A549 (cell line): ENCODE measurements at regions of chr19 and their contacts with region 1.

Region 1: GRCh38 chr19:47112997-47113849 is at the start of gene ZC3H4:
- DNase-seq: peak; percentile 99 to 100
- ATAC-seq: peak; percentile 81 to 92
- H3K4me3 ChIP-seq: peak within 1 kb of the TSS; percentile 98
- H3K27ac ChIP-seq: peak within 1 kb of the TSS; percentile 99
- H3K4me1 ChIP-seq: peaks cover 27% of the 10 kb centered on the region
- CTCF ChIP-seq: no peak
- EP300 ChIP-seq: no peak
- POLR2A ChIP-seq: peak; percentile 75
- RAD21 ChIP-seq: no peak
- polyA plus RNA-seq, gene ZC3H4: 7.7 and 9.6 TPM in 2 replicates

Region 2: DNA sequence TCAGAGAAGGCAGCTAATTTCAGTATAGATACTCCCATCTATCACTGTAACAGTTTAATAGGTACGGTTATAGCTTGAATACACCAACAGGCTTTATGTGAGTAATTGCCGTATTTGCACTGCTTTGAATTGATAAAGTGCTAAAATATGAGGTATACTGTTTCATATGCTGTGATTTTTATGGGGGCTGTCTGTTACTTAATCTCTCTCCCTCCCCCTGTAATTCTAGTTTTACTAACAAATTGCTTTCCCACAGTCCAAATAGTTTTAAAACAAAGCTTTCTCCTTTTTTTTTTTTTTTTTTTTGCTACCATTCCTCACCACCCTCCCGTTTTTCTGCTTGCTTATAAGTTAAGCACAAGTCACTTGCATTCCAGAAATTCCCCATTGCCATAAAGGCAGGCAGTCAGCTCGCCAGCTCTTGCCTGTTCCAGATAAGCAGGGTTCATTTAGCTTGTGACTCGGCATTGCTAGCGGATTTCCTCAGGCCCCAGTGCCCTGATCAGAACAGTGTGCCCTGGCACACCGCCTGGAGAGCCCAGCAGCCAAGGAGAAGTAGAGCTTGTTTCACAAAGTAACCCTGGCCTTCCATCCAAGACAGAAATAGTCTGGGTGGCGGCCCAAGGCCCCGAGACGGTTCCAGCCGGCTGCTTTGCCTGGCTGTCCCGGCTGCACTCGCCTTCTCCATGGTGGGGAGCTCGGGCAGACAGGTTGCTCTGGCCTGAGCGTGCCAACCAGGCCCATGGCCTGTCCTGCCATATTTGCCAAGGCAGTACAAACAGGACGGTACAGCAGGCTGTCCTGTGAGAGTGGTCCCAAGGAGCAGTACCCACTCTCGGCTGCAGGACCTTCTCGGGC is 137.1 kb before region 1 on chr19:
- CTCF ChIA-PET with region 1: no interaction called
- POLR2A ChIA-PET with region 1: no interaction called
- DNase-seq: peak in 1 of 2 experiments; percentile 58
- ATAC-seq: peak; percentile 38 to 75
- H3K4me3 ChIP-seq: no peak overlapping the region
- H3K27ac ChIP-seq: peak overlapping the region; percentile 61 to 76
- H3K4me1 ChIP-seq: peaks cover 36% of the 10 kb centered on the region
- CTCF ChIP-seq: no peak
- EP300 ChIP-seq: no peak
- POLR2A ChIP-seq: no peak
- RAD21 ChIP-seq: no peak

Region 3: DNA sequence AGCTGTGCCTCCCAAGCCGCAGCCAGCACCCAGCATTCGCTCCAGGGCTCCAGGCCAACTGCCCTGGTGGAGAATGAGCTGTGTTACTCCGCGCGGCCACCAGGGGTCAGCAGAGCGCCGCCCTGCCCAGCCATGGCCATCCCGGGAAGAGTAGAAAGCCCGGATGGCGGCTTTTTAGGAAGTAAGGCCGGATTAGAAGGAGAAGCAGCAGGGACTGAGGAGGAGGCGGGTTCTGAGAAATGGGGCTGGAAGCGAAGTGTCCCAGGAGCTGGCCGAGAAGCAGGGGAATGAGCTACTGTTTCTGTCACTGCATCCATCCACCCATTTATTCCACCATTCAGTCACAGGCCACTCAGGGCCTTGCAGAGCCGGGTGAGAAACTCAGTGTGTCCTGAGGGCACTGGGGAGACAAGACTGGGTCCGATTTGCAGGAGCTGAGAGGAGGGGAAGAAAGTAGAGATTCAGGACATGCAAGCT is 100.1 kb before region 1 on chr19:
- CTCF ChIA-PET with region 1: interaction called, 128 read pairs
- POLR2A ChIA-PET with region 1: interaction called, 5 read pairs
- DNase-seq: peak in 1 of 2 experiments; percentile 83
- ATAC-seq: peak; percentile 94 to 96
- H3K4me3 ChIP-seq: no peak overlapping the region
- H3K27ac ChIP-seq: peak overlapping the region; percentile 47 to 76
- H3K4me1 ChIP-seq: peaks cover 4% of the 10 kb centered on the region; the same call in 1 of the 3 replicates
- CTCF ChIP-seq: peak; percentile 95
- EP300 ChIP-seq: no peak
- POLR2A ChIP-seq: no peak
- RAD21 ChIP-seq: peak; percentile 98

Region 4: DNA sequence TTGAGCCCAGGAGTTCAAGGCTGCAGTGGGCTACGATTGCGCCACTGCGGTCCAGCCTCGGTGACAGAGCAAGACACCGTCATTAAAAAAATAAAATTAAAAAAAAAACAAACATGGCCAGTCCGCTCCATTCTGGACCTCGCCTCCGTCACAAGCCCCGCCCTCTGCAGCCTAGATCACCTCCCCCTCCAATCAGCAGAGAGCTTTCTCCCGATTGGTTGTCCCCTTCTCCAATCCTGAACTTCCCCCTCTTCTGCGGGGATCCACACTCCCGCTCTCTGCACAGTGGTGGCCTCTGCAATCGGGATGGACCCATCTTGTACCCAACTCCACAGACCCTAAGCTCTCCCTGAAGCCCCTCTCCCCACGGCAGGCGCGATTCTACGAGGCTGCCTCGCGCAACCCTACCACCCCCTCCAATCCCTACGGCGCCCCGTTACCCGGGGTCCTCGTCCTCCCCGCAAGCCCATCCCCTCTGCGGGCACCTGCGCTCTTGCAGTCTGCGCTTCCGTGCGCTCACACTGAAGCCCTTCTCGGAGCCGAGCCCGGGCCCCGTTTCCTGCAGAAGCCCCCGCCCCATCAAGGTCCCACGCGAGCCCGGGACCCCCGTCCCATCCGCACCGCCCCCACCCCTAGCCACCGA is 65.3 kb before region 1 on chr19:
- CTCF ChIA-PET with region 1: interaction called, 3 read pairs
- POLR2A ChIA-PET with region 1: interaction called, 16 read pairs
- DNase-seq: peak; percentile 94 to 100
- ATAC-seq: peak; percentile 86 to 88
- H3K4me3 ChIP-seq: peak overlapping the region; percentile 80
- H3K27ac ChIP-seq: peak overlapping the region; percentile 78 to 91
- H3K4me1 ChIP-seq: 0 out of 3 replicates have a peak, but pooled peaks cover 4% of the 10 kb centered on the region
- CTCF ChIP-seq: no peak
- EP300 ChIP-seq: no peak
- POLR2A ChIP-seq: peak; percentile 68
- RAD21 ChIP-seq: no peak

Region 5: GRCh38 chr19:47094557-47095475 is 18.4 kb before region 1 on chr19:
- CTCF ChIA-PET with region 1: interaction called, 5 read pairs
- POLR2A ChIA-PET with region 1: interaction called, 14 read pairs
- DNase-seq: no peak
- ATAC-seq: no peak; a peak in 1 of 6 replicates
- H3K4me3 ChIP-seq: no peak overlapping the region
- H3K27ac ChIP-seq: peak overlapping the region; percentile 43 to 68; a peak in 3 of 6 replicates
- H3K4me1 ChIP-seq: peaks cover 26% of the 10 kb centered on the region
- CTCF ChIP-seq: no peak
- EP300 ChIP-seq: no peak
- POLR2A ChIP-seq: no peak
- RAD21 ChIP-seq: no peak

Region 6: GRCh38 chr19:47130591-47131227 is 17.5 kb after region 1 on chr19 and contains the start of gene SAE1:
- CTCF ChIA-PET with region 1: interaction called, 30 read pairs
- POLR2A ChIA-PET with region 1: interaction called, 22 read pairs
- DNase-seq: peak; percentile 100
- ATAC-seq: peak; percentile 91 to 92
- H3K4me3 ChIP-seq: peak within 1 kb of the TSS; percentile 71
- H3K27ac ChIP-seq: peak within 1 kb of the TSS; percentile 92 to 93
- H3K4me1 ChIP-seq: peaks cover 35% of the 10 kb centered on the region
- CTCF ChIP-seq: peak; percentile 50
- EP300 ChIP-seq: no peak
- POLR2A ChIP-seq: peak; percentile 90
- RAD21 ChIP-seq: peak in 1 of 2 experiments; percentile 53; a peak in 2 of 5 replicates
- polyA plus RNA-seq, gene SAE1: 229 and 249 TPM in 2 replicates

Region 7: DNA sequence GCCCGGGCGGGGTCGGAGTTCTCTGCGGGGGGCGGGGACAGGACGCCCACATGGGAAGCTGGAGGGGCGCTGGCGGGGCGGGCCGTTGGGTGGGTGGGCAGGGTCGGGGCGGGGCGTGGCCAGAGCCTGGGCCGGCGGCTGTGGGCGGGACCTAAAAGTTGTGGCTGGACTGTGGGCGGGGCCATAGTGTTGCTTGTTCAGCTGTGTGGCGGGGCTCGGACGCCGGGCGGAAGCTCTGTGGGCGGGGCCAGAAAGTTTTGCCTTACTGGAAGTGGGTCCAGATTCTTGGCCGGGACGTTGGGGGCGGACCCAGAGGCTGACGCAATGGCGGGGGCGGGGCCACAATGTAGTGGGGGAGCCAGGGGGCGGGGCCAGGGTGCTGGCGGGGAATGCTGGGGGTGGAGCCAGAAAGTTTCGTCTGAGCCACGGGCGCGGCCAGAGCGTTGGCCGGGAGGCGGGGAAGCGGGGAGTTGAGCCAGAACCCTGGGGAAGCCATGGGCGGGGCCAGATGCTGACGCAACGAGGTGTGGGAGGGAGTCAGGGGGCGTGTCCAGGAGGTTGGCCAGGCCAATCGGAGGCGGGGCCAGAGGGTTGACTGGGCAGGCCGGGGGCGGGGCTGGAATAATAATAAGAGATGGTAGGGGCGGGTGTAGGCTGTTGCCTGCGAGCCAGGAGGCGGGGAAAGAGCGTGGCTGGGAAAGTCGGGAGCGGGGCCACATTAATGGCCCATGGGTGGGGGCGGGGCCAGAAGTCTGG is 143.6 kb after region 1 on chr19:
- CTCF ChIA-PET with region 1: no interaction called
- POLR2A ChIA-PET with region 1: interaction called, 17 read pairs
- DNase-seq: peak; percentile 99 to 100
- ATAC-seq: peak; percentile 71 to 85
- H3K4me3 ChIP-seq: peak overlapping the region; percentile 61
- H3K27ac ChIP-seq: peak overlapping the region; percentile 91 to 92
- H3K4me1 ChIP-seq: peaks cover 30% of the 10 kb centered on the region
- CTCF ChIP-seq: no peak
- EP300 ChIP-seq: no peak
- POLR2A ChIP-seq: no peak
- RAD21 ChIP-seq: no peak